Endothelial cell of umbilical vein (primary cell): ENCODE measurements at regions of chr12 and their contacts with region 1.

Region 1: GRCh38 chr12:131912518-131913294 is 16.4 kb upstream of the PUS1 start:
- DNase-seq: peak; percentile 85
- H3K4me3 ChIP-seq: no peak overlapping the region
- H3K27ac ChIP-seq: peak overlapping the region; percentile 21
- H3K4me1 ChIP-seq: peaks cover 12% of the 10 kb centered on the region
- H3K27me3 ChIP-seq: no peaks in the 10 kb centered on the region
- CTCF ChIP-seq: no peak
- POLR2A ChIP-seq: no peak

Region 2: GRCh38 chr12:131894313-131894860 is 18.3 kb before region 1 on chr12 and contains the start of gene ULK1:
- CTCF ChIA-PET with region 1: no interaction called
- POLR2A ChIA-PET with region 1: no interaction called
- dilution Hi-C with region 1: no loop called
- intact Hi-C with region 1: loop called (anchors 1 kb)
- DNase-seq: peak; percentile 79
- H3K4me3 ChIP-seq: peak within 1 kb of the TSS; percentile 37 to 56 (median 52)
- H3K27ac ChIP-seq: peak within 1 kb of the TSS; percentile 60
- H3K4me1 ChIP-seq: peaks cover 9% of the 10 kb centered on the region
- H3K27me3 ChIP-seq: peaks cover 0 to 3% of the 10 kb centered on the region in 2 experiments
- CTCF ChIP-seq: no peak
- POLR2A ChIP-seq: peak; percentile 92
- total RNA-seq, gene ULK1: 37.8 and 38.2 TPM in 2 replicates

Region 3: GRCh38 chr12:131922772-131923171 is 10.1 kb after region 1 on chr12:
- CTCF ChIA-PET with region 1: no interaction called
- POLR2A ChIA-PET with region 1: no interaction called
- dilution Hi-C with region 1: no loop called
- intact Hi-C with region 1: no loop called
- DNase-seq: no peak
- H3K4me3 ChIP-seq: no peak overlapping the region
- H3K27ac ChIP-seq: no peak overlapping the region
- H3K4me1 ChIP-seq: no peaks in the 10 kb centered on the region
- H3K27me3 ChIP-seq: no peaks in the 10 kb centered on the region
- CTCF ChIP-seq: no peak
- POLR2A ChIP-seq: no peak

Region 4: GRCh38 chr12:132014092-132014914 is 101.6 kb after region 1 on chr12:
- CTCF ChIA-PET with region 1: no interaction called
- POLR2A ChIA-PET with region 1: no interaction called
- dilution Hi-C with region 1: no loop called
- intact Hi-C with region 1: no loop called
- DNase-seq: no peak
- H3K4me3 ChIP-seq: no peak overlapping the region
- H3K27ac ChIP-seq: no peak overlapping the region
- H3K4me1 ChIP-seq: no peaks in the 10 kb centered on the region
- H3K27me3 ChIP-seq: no peaks in the 10 kb centered on the region
- CTCF ChIP-seq: no peak
- POLR2A ChIP-seq: no peak